ENCODE measurements at regions of chr21 and their contacts with region 1.

Region 1: GRCh38 chr21:31725202-31725839 is 6.6 kb downstream of the SCAF4 start:
- DNase-seq: no peak
- H3K4me3 Mint-ChIP-seq: no peak overlapping the region
- H3K27ac Mint-ChIP-seq: no peak overlapping the region
- H3K4me1 Mint-ChIP-seq: peaks cover 50% of the 10 kb centered on the region
- H3K27me3 Mint-ChIP-seq: no peaks in the 10 kb centered on the region

Region 2: GRCh38 chr21:31665397-31665796 is 59.9 kb before region 1 on chr21:
- CTCF ChIA-PET with region 1: no interaction called
- POLR2A ChIA-PET with region 1: no interaction called
- intact Hi-C with region 1: loop called (anchors 2 kb)
- DNase-seq: peak; percentile 70
- H3K4me3 Mint-ChIP-seq: no peak overlapping the region
- H3K27ac Mint-ChIP-seq: peak overlapping the region; percentile 57
- H3K4me1 Mint-ChIP-seq: peaks cover 93% of the 10 kb centered on the region
- H3K27me3 Mint-ChIP-seq: no peaks in the 10 kb centered on the region

Region 3: DNA sequence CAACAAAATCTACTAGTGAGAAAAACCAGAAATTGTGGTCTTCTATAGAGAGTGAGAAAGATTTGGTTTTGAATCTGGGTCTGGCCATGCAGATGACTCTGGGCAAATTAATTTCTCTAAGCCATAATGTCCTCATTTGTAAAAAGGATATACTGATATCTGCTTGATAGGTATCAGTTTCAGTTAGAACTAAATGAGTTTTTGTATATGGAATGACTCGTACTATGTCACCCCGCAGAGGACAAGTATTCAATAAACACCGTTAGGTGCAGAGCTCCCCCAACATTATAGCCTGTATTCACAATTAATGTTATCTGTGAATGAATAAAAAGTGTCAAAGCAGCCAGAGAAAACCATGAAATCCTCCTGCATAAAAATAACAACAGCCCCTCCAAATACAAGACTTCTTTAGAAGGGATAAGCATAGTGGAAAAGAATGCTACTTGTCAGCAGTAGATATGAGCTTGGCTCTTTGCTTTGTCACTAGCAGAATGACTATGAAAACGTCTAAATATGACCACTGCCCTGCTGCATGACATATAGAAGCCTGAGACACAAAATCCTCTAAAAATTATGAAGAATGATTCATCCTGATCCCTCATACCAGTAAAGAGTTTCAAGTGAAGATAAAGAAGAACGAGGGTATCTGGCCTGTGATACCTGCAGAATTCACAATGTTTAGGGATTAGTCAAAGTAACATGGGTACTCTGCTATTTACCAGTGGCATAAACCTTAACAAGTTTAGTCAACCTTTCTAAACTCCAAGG is 11.2 kb before region 1 on chr21:
- CTCF ChIA-PET with region 1: no interaction called
- POLR2A ChIA-PET with region 1: interaction called, 6 read pairs
- intact Hi-C with region 1: loop called (anchors 1 kb)
- DNase-seq: no peak
- H3K4me3 Mint-ChIP-seq: no peak overlapping the region
- H3K27ac Mint-ChIP-seq: peak overlapping the region; percentile 71
- H3K4me1 Mint-ChIP-seq: peaks cover 84% of the 10 kb centered on the region
- H3K27me3 Mint-ChIP-seq: no peaks in the 10 kb centered on the region

Region 4: DNA sequence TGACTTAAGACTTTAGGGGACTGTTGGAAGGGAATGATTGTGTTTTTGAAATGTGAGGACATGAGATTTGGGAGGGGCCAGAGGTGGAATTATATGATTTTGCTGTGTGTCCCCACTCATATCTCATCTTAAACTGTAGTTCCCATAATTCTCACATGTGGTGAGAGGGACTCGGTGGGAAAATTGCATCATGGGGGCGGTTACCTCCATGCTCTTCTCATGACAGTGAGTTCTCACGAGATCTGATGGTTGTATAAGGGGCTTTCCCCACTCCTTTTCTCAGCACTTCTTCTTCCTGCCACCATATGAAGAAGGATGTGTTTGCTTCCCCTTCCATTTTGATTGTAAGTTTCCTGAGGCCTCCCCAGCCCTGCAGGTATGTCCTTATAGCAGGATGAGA is 41.6 kb after region 1 on chr21:
- CTCF ChIA-PET with region 1: no interaction called
- POLR2A ChIA-PET with region 1: no interaction called
- intact Hi-C with region 1: no loop called
- DNase-seq: no peak
- H3K4me3 Mint-ChIP-seq: no peak overlapping the region
- H3K27ac Mint-ChIP-seq: no peak overlapping the region
- H3K4me1 Mint-ChIP-seq: no peaks in the 10 kb centered on the region
- H3K27me3 Mint-ChIP-seq: peaks cover 12% of the 10 kb centered on the region

Region 5: DNA sequence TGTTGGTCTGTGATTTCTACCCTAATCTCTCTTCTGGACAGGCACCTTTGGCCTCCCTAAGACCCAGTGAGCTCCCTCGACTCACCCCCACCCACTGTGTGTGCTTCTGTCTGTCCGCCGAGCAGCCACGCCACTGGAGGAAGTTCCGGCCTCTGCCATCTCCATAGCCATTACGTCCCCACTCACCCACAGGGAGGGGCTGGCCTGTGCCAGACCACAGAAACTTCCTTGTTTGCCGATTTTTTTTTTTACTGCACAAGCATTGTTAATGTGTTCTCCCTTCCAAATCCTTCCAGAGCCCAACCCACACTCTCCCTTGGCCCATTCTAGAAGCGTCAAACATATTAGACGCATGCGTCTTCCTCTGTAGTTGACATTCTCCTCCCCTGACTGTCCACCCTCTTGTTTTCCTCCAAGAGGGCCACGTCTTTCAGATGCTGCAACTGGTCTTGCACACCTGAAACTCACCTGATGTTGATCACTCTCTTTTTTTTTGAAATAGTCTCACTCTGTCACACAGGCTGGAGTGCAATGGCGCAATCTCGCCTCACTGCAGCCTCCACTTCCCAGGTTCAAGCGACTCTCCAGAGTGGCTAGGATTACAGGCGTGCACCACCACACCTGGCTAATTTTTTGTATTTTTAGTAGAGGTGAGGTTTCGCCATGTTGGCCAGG is 759.5 kb after region 1 on chr21:
- CTCF ChIA-PET with region 1: no interaction called
- POLR2A ChIA-PET with region 1: no interaction called
- intact Hi-C with region 1: no loop called
- DNase-seq: no peak
- H3K4me3 Mint-ChIP-seq: no peak overlapping the region
- H3K27ac Mint-ChIP-seq: no peak overlapping the region
- H3K4me1 Mint-ChIP-seq: no peaks in the 10 kb centered on the region
- H3K27me3 Mint-ChIP-seq: no peaks in the 10 kb centered on the region

Measured in activated CD4-positive, alpha-beta memory T cell treated with anti-CD3 and anti-CD28 coated beads for 36 hours (primary cell).